ENCODE measurements at regions of chr1 and their contacts with region 1.

Region 1: GRCh38 chr1:108125312-108126138 is 74.6 kb downstream of the SLC25A24 start:
- DNase-seq: peak; percentile 42 to 85 (median 54)
- ATAC-seq: peak; percentile 93
- H3K4me3 ChIP-seq: no peak overlapping the region
- H3K4me3 Mint-ChIP-seq: no peak overlapping the region
- H3K27ac ChIP-seq: no peak overlapping the region
- H3K27ac Mint-ChIP-seq: no peak overlapping the region
- H3K4me1 ChIP-seq: peaks cover 3% of the 10 kb centered on the region
- H3K4me1 Mint-ChIP-seq: peaks cover 7% of the 10 kb centered on the region
- H3K27me3 ChIP-seq: no peaks in the 10 kb centered on the region
- H3K27me3 Mint-ChIP-seq: no peaks in the 10 kb centered on the region
- CTCF ChIP-seq: peak; percentile 92

Region 2: GRCh38 chr1:107870696-107871095 is 254.8 kb before region 1 on chr1:
- CTCF ChIA-PET with region 1: no interaction called
- POLR2A ChIA-PET with region 1: no interaction called
- intact Hi-C with region 1: no loop called
- DNase-seq: no peak
- ATAC-seq: no peak
- H3K4me3 ChIP-seq: no peak overlapping the region
- H3K4me3 Mint-ChIP-seq: no peak overlapping the region
- H3K27ac ChIP-seq: no peak overlapping the region
- H3K27ac Mint-ChIP-seq: no peak overlapping the region
- H3K4me1 ChIP-seq: peaks cover under 1% of the 10 kb centered on the region
- H3K4me1 Mint-ChIP-seq: peaks cover 7% of the 10 kb centered on the region
- H3K27me3 ChIP-seq: no peaks in the 10 kb centered on the region
- H3K27me3 Mint-ChIP-seq: no peaks in the 10 kb centered on the region
- CTCF ChIP-seq: no peak

Region 3: GRCh38 chr1:107897438-107898345 is 227.8 kb before region 1 on chr1:
- CTCF ChIA-PET with region 1: no interaction called
- POLR2A ChIA-PET with region 1: no interaction called
- intact Hi-C with region 1: loop called in 1 of 2 experiments (anchors 5 kb)
- DNase-seq: peak in 4 of 14 experiments; percentile 10 to 33 (median 20)
- ATAC-seq: peak; percentile 72
- H3K4me3 ChIP-seq: no peak overlapping the region
- H3K4me3 Mint-ChIP-seq: peak overlapping the region; percentile 56
- H3K27ac ChIP-seq: no peak overlapping the region
- H3K27ac Mint-ChIP-seq: peak overlapping the region; percentile 9
- H3K4me1 ChIP-seq: peaks cover 6% of the 10 kb centered on the region
- H3K4me1 Mint-ChIP-seq: peaks cover 39% of the 10 kb centered on the region
- H3K27me3 ChIP-seq: no peaks in the 10 kb centered on the region
- H3K27me3 Mint-ChIP-seq: no peaks in the 10 kb centered on the region
- CTCF ChIP-seq: no peak

Region 4: DNA sequence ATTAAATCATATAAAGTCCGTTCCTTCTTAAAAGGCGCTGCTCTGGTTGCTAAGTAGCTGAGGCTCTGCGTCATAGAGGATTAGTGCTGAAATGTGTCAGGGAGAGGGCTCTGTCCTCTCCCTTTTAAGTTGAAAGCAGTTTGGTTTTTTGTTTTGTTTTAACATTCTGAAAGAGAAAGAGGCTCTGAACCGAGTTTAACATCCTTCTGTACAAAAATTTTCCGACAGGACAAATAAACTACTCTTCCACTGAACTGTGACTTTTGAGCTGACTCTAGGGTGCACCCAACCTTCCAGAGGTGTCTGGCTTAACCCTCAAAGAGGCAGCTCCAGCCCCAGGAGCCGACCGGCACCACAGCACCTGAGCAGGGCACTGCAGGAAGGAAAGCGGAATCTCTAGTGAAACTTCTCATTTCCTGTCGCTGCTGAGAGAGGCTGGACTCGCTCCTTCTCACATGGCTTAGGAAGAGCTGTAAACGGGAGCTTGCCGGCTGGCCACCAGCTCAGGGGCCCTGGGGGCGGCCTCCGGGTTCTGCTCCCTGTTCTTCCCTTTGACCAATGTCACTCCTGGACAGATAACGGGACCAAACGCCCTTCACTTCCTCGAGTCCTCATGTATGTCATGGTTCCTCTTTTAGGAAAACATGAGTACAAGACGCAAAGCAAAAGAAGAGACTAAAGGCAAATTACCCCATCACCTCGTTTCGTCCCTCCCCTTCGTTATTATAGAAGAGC is 161.8 kb before region 1 on chr1:
- CTCF ChIA-PET with region 1: no interaction called
- POLR2A ChIA-PET with region 1: interaction called, 5 read pairs
- intact Hi-C with region 1: loop called in 1 of 2 experiments (anchors 5 kb)
- DNase-seq: peak in 11 of 14 experiments; percentile 10 to 72 (median 27)
- ATAC-seq: peak; percentile 64
- H3K4me3 ChIP-seq: peak overlapping the region; percentile 85
- H3K4me3 Mint-ChIP-seq: peak overlapping the region; percentile 91
- H3K27ac ChIP-seq: peak overlapping the region; percentile 6 to 48
- H3K27ac Mint-ChIP-seq: peak overlapping the region; percentile 91
- H3K4me1 ChIP-seq: peaks cover 23% of the 10 kb centered on the region
- H3K4me1 Mint-ChIP-seq: peaks cover 29% of the 10 kb centered on the region
- H3K27me3 ChIP-seq: no peaks in the 10 kb centered on the region
- H3K27me3 Mint-ChIP-seq: no peaks in the 10 kb centered on the region
- CTCF ChIP-seq: no peak

Region 5: DNA sequence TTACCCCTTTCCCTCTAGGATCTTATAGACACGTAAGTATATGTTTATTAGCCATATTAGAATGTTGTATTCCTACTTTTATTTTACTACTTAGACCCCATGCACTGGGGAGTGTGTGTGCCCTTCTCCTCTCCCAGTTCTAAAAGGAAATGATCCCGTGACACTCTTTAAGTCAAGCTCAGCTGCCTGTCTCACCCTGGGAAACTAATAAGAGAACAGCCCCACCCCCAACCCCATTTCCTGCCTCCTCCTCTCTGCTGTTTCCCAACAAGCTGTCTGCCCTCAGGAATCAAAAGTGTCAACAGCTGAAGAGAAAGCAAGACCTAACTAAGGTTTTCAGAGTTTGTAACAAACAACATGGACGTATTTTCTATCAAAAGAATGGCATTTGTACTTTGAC is 68.0 kb before region 1 on chr1:
- CTCF ChIA-PET with region 1: no interaction called
- POLR2A ChIA-PET with region 1: no interaction called
- intact Hi-C with region 1: loop called in 1 of 2 experiments (anchors 5 kb)
- DNase-seq: peak in 1 of 14 experiments; percentile 26
- ATAC-seq: no peak
- H3K4me3 ChIP-seq: no peak overlapping the region
- H3K4me3 Mint-ChIP-seq: no peak overlapping the region
- H3K27ac ChIP-seq: no peak overlapping the region
- H3K27ac Mint-ChIP-seq: no peak overlapping the region
- H3K4me1 ChIP-seq: no peaks in the 10 kb centered on the region
- H3K4me1 Mint-ChIP-seq: no peaks in the 10 kb centered on the region
- H3K27me3 ChIP-seq: no peaks in the 10 kb centered on the region
- H3K27me3 Mint-ChIP-seq: no peaks in the 10 kb centered on the region
- CTCF ChIP-seq: no peak